Activated CD8-positive, alpha-beta memory T cell treated with anti-CD3 and anti-CD28 coated beads, Interleukin-2, amount 10 ng/mL, durations not matched to agents 7 days and 5 days (primary cell): ENCODE measurements at regions of chr21 and their contacts with region 1.

Region 1: DNA sequence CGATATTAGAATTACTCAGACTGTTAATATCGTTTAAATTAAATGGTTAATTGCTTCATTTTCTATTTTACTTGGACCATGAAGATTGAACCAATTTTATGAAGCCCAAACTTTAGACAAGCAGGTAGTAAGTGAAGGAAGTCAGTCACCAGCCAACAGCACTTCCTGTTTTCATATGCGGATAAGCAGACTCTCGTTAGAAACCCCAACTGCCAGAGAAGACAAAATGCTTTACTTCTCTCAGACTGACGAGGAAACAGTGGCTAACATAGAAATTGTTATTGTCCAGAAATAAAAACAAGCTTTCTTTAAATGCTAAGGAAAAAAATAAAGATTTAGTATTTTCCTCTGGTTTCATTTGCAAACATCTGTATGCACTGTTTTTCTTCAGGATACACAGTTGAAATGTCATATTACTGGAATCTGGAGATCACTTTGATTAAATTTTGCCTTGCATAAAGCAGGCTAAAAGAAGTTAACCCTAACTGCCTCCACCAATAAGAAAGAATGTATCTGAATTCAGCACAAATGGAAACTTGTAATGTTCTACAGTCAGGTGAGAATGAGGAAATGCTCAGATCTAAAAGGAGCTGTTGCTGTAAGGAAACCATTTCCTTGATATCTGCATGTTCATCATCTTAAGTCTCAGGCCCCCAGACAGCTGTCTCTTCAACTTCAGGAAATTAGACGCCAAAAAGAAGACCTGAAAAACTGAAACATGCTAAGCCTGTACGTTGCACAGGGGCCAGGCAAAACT is 129.8 kb upstream of the SAMSN1 start:
- DNase-seq: peak; percentile 52
- ATAC-seq: peak; percentile 87
- H3K4me3 Mint-ChIP-seq: peak overlapping the region; percentile 51
- H3K27ac Mint-ChIP-seq: peak overlapping the region; percentile 94
- H3K4me1 Mint-ChIP-seq: peaks cover 29% of the 10 kb centered on the region
- H3K27me3 Mint-ChIP-seq: no peaks in the 10 kb centered on the region

Region 2: GRCh38 chr21:14686466-14687267 is 10.7 kb after region 1 on chr21:
- CTCF ChIA-PET with region 1: interaction called, 13 read pairs
- DNase-seq: no peak
- ATAC-seq: peak; percentile 77
- H3K4me3 Mint-ChIP-seq: peak overlapping the region; percentile 47
- H3K27ac Mint-ChIP-seq: peak overlapping the region; percentile 74
- H3K4me1 Mint-ChIP-seq: peaks cover 30% of the 10 kb centered on the region
- H3K27me3 Mint-ChIP-seq: no peaks in the 10 kb centered on the region